Activated naive CD4-positive, alpha-beta T cell treated with anti-CD3 and anti-CD28 coated beads for 36 hours (primary cell): ENCODE measurements at regions of chr3 and their contacts with region 1.

Region 1: DNA sequence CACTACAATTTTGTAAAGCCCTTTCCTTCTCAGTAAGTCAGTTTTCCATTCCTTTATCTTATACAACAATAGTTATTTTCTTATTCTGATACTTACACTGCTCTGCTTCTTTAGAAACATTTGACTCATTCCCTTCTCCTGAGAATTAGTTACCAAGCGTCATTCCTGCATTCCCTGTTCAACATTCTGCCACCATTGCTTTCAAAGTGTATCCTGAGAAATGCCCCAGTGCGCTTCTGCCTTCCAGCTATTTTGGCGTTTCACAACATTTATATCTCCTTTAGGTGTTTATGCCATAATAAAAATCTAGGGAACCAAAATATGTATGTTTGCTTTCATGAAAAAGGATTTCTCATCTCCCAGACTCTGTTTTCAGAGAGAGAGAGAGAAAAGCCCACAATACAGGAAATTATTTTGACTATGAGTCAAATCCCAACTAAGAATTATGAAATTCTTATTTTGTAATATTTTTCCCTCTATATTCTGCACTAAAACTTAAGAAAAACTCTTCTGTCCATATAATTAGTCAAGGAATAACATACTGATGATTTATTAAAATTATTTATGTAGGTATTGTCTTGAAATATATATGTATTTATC is 118.2 kb upstream of the RAP2B start:
- DNase-seq: no peak
- H3K4me3 Mint-ChIP-seq: no peak overlapping the region
- H3K27ac Mint-ChIP-seq: no peak overlapping the region
- H3K4me1 Mint-ChIP-seq: peaks cover 3% of the 10 kb centered on the region
- H3K27me3 Mint-ChIP-seq: no peaks in the 10 kb centered on the region

Region 2: DNA sequence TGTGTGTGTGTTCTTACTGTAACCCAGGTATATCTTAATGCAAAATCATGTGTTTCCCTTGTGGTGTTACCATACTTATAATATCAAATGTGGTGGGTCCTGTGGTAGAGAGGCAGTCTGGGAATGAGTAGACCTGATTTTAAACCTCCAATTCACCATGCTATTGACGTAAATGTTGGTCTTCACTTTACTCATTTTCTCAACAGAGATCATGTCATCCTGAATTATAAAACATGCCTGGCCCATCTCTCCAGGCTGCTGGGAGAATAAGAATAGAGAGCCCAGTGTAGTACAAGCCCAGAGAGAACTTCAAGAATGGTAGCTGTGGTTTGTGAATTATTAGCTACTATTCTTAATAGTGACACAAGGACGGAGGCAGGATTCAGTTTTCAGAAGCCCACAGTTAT is 687.0 kb before region 1 on chr3:
- CTCF ChIA-PET with region 1: no interaction called
- intact Hi-C with region 1: no loop called
- DNase-seq: peak; percentile 52
- H3K4me3 Mint-ChIP-seq: no peak overlapping the region
- H3K27ac Mint-ChIP-seq: peak overlapping the region; percentile 70
- H3K4me1 Mint-ChIP-seq: peaks cover 78% of the 10 kb centered on the region
- H3K27me3 Mint-ChIP-seq: no peaks in the 10 kb centered on the region

Region 3: DNA sequence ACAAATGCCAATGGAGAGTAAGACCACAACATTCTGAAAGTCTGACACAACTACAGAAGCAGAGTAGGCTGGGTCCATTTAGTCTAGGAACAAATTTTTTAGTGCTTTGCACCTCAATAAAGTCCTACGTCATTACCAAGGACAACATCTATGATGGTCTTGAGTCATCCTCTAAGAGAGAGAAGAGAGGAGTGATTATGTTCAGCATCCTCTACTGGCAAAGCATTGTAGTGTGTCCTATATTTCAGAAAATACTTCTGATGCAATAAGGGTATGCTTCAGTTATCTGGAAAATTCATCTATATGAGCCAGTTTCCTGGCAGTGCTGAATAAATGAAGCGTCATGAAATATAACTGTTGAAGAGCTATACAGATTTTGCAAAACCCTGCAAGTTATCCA is 113.3 kb before region 1 on chr3:
- CTCF ChIA-PET with region 1: no interaction called
- intact Hi-C with region 1: no loop called
- DNase-seq: no peak
- H3K4me3 Mint-ChIP-seq: no peak overlapping the region
- H3K27ac Mint-ChIP-seq: no peak overlapping the region
- H3K4me1 Mint-ChIP-seq: no peaks in the 10 kb centered on the region
- H3K27me3 Mint-ChIP-seq: peaks cover 3% of the 10 kb centered on the region

Region 4: GRCh38 chr3:153080778-153081240 is 37.0 kb after region 1 on chr3:
- CTCF ChIA-PET with region 1: no interaction called
- intact Hi-C with region 1: no loop called
- DNase-seq: no peak
- H3K4me3 Mint-ChIP-seq: no peak overlapping the region
- H3K27ac Mint-ChIP-seq: no peak overlapping the region
- H3K4me1 Mint-ChIP-seq: no peaks in the 10 kb centered on the region
- H3K27me3 Mint-ChIP-seq: no peaks in the 10 kb centered on the region

Region 5: GRCh38 chr3:153291056-153291685 is 247.3 kb after region 1 on chr3:
- CTCF ChIA-PET with region 1: interaction called, 7 read pairs
- intact Hi-C with region 1: loop called (anchors 1 kb)
- DNase-seq: peak; percentile 20
- H3K4me3 Mint-ChIP-seq: no peak overlapping the region
- H3K27ac Mint-ChIP-seq: peak overlapping the region; percentile 26
- H3K4me1 Mint-ChIP-seq: peaks cover 40% of the 10 kb centered on the region
- H3K27me3 Mint-ChIP-seq: no peaks in the 10 kb centered on the region

Region 6: GRCh38 chr3:153595186-153595815 is 551.5 kb after region 1 on chr3:
- CTCF ChIA-PET with region 1: no interaction called
- intact Hi-C with region 1: loop called (anchors 1 kb)
- DNase-seq: no peak
- H3K4me3 Mint-ChIP-seq: no peak overlapping the region
- H3K27ac Mint-ChIP-seq: no peak overlapping the region
- H3K4me1 Mint-ChIP-seq: peaks cover 4% of the 10 kb centered on the region
- H3K27me3 Mint-ChIP-seq: no peaks in the 10 kb centered on the region

Region 7: DNA sequence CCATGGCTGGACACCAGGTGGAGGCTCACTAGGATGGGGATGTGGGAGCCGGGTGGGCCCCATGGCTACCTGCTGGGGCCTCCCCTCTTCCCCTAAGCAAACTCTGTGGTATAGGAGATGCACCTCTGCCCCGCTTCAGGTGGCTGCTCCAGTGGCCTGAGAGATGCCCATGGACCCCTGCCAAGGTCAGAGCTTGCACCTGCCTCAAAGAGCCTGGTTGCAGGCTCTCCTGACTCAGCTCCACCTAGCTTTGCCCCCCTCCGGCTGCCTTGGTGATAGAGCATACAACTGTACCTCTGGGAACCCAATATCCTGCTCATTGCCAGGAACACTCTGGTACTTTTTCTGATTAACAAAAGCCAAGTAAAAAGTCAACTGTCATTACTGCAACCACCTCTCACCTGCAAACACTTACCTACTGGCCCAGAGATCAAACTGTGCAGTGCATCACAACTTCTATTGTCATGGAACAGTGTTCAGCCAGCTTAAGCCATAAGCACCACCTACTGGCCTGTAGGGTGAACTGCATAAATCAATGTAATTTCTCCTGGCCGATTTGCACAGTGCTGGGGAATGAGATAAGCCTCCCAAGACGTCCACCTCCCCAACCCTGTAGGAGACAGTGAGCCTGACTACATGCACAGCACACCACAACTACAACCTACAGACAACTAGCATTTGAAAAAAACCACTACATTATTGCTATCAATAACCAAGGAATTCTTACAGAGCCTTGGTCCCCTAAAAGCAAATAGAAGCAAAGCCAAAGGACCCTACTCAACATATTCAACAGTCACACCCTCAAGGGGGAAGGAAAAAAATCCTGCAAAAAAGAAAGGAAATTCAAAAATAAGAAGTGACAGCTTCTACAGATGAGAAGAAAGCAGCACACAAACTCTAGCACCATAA is 725.0 kb after region 1 on chr3:
- CTCF ChIA-PET with region 1: interaction called, 6 read pairs
- intact Hi-C with region 1: loop called (anchors 1 kb)
- DNase-seq: peak; percentile 63
- H3K4me3 Mint-ChIP-seq: no peak overlapping the region
- H3K27ac Mint-ChIP-seq: no peak overlapping the region
- H3K4me1 Mint-ChIP-seq: peaks cover 1% of the 10 kb centered on the region
- H3K27me3 Mint-ChIP-seq: peaks cover 8% of the 10 kb centered on the region

Region 8: GRCh38 chr3:153970741-153971347 is 927.0 kb after region 1 on chr3:
- CTCF ChIA-PET with region 1: no interaction called
- intact Hi-C with region 1: loop called (anchors 5 kb)
- DNase-seq: no peak
- H3K4me3 Mint-ChIP-seq: no peak overlapping the region
- H3K27ac Mint-ChIP-seq: no peak overlapping the region
- H3K4me1 Mint-ChIP-seq: no peaks in the 10 kb centered on the region
- H3K27me3 Mint-ChIP-seq: peaks cover 15% of the 10 kb centered on the region